MCF 10A (cell line): ENCODE measurements at regions of chr7 and their contacts with region 1.

Region 1: GRCh38 chr7:112206238-112207044 is at the starts of genes DOCK4 and ZNF277:
- DNase-seq: peak; percentile 100
- H3K4me3 Mint-ChIP-seq: peak within 1 kb of the TSS; percentile 91
- H3K27ac Mint-ChIP-seq: peak within 1 kb of the TSS; percentile 95
- H3K4me1 Mint-ChIP-seq: peaks cover 25% of the 10 kb centered on the region
- H3K27me3 Mint-ChIP-seq: no peaks in the 10 kb centered on the region
- CTCF ChIP-seq: no peak
- total RNA-seq, gene DOCK4: 28.0 and 31.4 TPM in 2 replicates
- total RNA-seq, gene ZNF277: 17.1 and 19.9 TPM in 2 replicates

Region 2: GRCh38 chr7:111763221-111763801 is 443.1 kb before region 1 on chr7:
- CTCF ChIA-PET with region 1: no interaction called
- POLR2A ChIA-PET with region 1: no interaction called
- intact Hi-C with region 1: loop called (anchors 5 kb)
- DNase-seq: peak; percentile 63
- H3K4me3 Mint-ChIP-seq: no peak overlapping the region
- H3K27ac Mint-ChIP-seq: no peak overlapping the region
- H3K4me1 Mint-ChIP-seq: no peaks in the 10 kb centered on the region
- H3K27me3 Mint-ChIP-seq: no peaks in the 10 kb centered on the region
- CTCF ChIP-seq: peak; percentile 50

Region 3: DNA sequence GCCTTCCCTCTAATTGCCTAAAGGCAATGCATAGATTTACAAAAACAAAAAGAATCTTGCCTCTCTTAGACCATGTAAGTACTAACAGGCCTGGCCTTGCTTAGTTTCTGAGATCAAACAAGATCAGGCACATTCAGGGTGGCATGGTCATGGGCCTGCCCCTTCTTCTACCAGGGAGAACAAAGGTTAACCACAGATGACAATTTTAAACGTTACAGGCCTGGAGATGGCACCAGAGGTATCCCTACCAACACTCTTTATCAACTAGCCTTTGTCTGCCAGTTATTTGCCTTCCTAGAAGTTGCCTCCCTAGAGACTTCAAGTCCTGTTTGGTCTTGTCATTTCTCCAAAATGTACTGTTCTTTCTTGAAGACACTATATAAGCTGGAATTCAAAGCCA is 252.8 kb before region 1 on chr7:
- CTCF ChIA-PET with region 1: interaction called, 11 read pairs
- POLR2A ChIA-PET with region 1: interaction called, 22 read pairs
- intact Hi-C with region 1: loop called (anchors 2 kb)
- DNase-seq: peak; percentile 51
- H3K4me3 Mint-ChIP-seq: no peak overlapping the region
- H3K27ac Mint-ChIP-seq: peak overlapping the region; percentile 67
- H3K4me1 Mint-ChIP-seq: peaks cover 18% of the 10 kb centered on the region
- H3K27me3 Mint-ChIP-seq: no peaks in the 10 kb centered on the region
- CTCF ChIP-seq: peak; percentile 24

Region 4: DNA sequence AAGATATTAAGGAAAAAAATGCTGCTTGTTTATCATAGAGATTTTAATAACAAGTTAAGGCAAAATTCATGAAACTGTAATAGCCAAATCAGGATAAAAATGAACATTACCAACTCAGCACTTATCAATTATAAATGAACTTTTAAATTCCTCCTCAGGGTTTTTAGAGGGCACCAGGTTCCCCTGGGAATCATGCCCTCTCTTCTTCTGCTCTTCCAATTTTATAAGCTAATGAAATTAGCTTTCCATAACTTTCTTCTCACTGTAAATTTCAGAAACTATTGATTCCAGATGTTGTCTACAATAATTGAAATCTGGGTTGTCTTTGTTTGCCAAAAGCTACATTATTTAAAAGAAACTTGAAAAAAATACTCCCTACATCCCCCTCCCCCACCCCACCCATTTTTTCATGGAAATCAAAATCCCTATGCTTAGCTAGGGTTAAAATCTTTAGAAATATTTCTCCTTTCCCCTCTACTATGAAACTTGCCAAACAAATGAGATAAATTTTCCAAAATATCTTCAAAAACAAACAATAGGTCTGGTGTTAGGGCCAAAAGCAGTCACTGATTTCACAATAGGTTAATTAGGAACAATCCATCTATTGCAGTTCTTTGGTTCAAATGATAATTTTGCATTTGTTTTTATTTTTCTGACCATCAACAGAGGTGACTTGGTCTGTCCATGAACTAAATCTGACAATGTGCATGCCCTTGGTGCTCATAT is 188.0 kb before region 1 on chr7:
- CTCF ChIA-PET with region 1: no interaction called
- POLR2A ChIA-PET with region 1: interaction called, 10 read pairs
- intact Hi-C with region 1: no loop called
- DNase-seq: no peak
- H3K4me3 Mint-ChIP-seq: no peak overlapping the region
- H3K27ac Mint-ChIP-seq: no peak overlapping the region
- H3K4me1 Mint-ChIP-seq: peaks cover 10% of the 10 kb centered on the region
- H3K27me3 Mint-ChIP-seq: no peaks in the 10 kb centered on the region
- CTCF ChIP-seq: no peak

Region 5: DNA sequence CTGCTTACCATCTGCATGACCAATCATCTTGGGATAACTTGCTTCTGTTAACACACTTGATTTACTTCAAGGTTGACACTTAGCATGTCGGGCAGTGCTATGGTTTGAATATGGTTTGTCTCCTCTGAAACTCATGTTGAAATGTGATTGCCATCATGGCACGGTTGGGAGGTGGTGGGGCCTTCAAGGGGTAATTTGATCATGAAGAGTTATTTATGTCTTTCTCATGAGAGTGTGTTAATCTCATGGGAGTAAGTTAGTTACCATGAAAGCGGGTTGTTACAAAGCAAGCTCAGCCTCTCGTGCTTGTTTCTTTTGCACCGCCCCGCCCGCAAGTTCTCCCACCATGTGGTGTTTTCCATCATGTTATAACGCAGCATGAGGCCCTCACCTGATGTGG is 163.8 kb before region 1 on chr7:
- CTCF ChIA-PET with region 1: no interaction called
- POLR2A ChIA-PET with region 1: no interaction called
- intact Hi-C with region 1: no loop called
- DNase-seq: no peak
- H3K4me3 Mint-ChIP-seq: no peak overlapping the region
- H3K27ac Mint-ChIP-seq: no peak overlapping the region
- H3K4me1 Mint-ChIP-seq: no peaks in the 10 kb centered on the region
- H3K27me3 Mint-ChIP-seq: no peaks in the 10 kb centered on the region
- CTCF ChIP-seq: no peak

Region 6: GRCh38 chr7:112346381-112347060 is 140.1 kb after region 1 on chr7:
- CTCF ChIA-PET with region 1: no interaction called
- POLR2A ChIA-PET with region 1: no interaction called
- intact Hi-C with region 1: no loop called
- DNase-seq: no peak
- H3K4me3 Mint-ChIP-seq: no peak overlapping the region
- H3K27ac Mint-ChIP-seq: no peak overlapping the region
- H3K4me1 Mint-ChIP-seq: no peaks in the 10 kb centered on the region
- H3K27me3 Mint-ChIP-seq: no peaks in the 10 kb centered on the region
- CTCF ChIP-seq: no peak

Region 7: GRCh38 chr7:112390167-112390566 is 183.7 kb after region 1 on chr7:
- CTCF ChIA-PET with region 1: interaction called, 3 read pairs
- POLR2A ChIA-PET with region 1: interaction called, 5 read pairs
- intact Hi-C with region 1: loop called (anchors 5 kb)
- DNase-seq: no peak
- H3K4me3 Mint-ChIP-seq: no peak overlapping the region
- H3K27ac Mint-ChIP-seq: no peak overlapping the region
- H3K4me1 Mint-ChIP-seq: peaks cover 6% of the 10 kb centered on the region
- H3K27me3 Mint-ChIP-seq: no peaks in the 10 kb centered on the region
- CTCF ChIP-seq: no peak

Region 8: DNA sequence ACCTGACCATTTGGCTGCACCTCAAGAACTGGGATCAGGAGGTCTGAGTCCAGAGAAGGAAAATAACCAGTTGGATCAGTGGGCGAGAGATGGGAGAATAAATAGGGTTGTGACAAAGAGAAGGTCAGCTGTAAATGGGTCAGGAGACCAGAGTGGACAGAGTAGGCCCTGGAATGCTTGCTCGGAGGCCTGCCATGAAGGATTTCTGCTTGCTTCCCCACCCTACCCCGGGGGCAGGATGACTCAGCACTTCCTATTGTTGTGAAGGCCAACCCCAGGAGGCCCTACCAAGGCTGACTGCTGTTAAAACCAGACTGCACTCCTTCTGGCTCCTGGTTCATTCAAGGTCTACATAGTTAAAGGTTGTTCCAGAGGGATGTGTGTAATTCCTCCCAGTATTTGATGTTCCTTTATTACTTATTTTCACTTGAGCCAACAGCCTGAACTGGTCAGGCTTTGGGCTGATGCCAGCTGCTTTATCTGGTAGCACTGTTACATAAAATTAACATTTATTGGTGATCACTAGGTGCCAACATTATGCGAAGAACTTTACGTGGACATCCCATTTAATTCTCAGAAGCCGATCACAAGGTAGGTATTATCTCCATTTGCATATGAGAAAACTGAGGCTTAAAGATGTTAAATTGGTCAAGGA is 216.5 kb after region 1 on chr7:
- CTCF ChIA-PET with region 1: interaction called, 5 read pairs
- POLR2A ChIA-PET with region 1: interaction called, 12 read pairs
- intact Hi-C with region 1: no loop called
- DNase-seq: peak; percentile 97
- H3K4me3 Mint-ChIP-seq: no peak overlapping the region
- H3K27ac Mint-ChIP-seq: peak overlapping the region; percentile 75
- H3K4me1 Mint-ChIP-seq: peaks cover 40% of the 10 kb centered on the region
- H3K27me3 Mint-ChIP-seq: no peaks in the 10 kb centered on the region
- CTCF ChIP-seq: no peak